Activated CD8-positive, alpha-beta T cell treated with anti-CD3 and anti-CD28 coated beads for 36 hours (primary cell): ENCODE measurements at regions of chr3 and their contacts with region 1.

Region 1: DNA sequence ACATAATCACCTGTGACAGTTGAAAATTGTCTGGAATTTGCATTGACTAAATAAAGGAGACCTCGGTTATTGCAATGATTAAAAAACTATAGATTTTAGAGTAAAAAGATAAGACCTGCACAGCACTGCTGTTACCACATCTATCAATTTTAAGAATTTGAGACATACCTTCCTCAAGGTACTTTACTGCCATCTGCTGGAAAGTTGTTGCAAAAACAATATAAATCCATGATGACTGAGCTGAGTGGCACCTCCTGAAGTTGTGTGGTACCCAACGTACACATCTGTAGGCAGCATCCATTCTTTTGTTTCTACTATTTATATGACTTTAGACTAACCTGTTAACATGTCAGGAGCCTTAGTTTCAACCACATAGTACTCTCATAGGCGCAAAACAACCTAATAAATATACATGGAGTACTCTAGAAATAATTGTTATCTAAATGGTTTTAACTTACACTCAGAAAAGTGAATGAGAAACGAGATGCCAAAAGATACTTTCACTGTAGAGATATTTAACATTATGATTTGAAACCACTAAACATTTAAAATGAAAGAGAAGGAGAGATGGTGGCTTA is 106.7 kb downstream of the GHSR start:
- DNase-seq: peak; percentile 16
- ATAC-seq: peak; percentile 81
- H3K4me3 Mint-ChIP-seq: no peak overlapping the region
- H3K27ac Mint-ChIP-seq: no peak overlapping the region
- H3K4me1 Mint-ChIP-seq: no peaks in the 10 kb centered on the region
- H3K27me3 Mint-ChIP-seq: no peaks in the 10 kb centered on the region
- CTCF ChIP-seq: peak; percentile 83

Region 2: DNA sequence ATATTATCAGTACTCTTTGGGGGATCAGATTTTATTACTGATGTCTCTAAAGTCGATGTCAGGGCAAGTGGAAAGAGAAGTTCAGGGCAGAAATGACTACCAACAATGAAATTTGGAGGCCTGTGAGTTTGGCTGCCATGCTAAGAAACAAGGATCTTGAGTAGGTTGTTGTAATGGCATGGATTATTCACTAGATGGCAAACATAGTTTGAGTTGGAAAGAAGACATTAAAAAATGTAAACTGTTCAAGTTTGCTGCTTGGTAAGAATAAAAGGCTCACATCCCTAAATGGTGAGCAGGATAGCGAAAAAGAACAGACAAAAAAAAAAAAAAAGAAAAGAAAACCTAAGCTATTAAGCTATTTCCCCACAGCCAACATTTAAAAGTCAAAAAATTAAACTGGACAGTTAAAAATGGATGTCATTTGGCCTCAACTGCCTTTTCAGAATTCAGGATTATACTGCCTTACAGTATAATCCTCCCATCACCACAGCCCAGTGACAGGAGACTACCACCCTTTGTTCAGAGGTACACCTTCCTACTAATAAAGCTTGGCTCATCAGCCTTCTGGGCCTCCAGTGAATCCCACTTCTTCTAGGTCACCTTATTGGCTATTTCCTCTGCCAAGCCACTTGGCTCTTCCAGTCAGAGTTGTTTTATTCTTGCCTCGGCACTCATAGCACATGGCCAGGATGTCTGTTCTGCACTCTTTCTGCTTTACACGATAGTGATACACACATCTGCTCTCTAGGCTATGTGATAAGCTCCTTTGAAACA is 695.0 kb before region 1 on chr3:
- CTCF ChIA-PET with region 1: interaction called, 16 read pairs
- POLR2A ChIA-PET with region 1: no interaction called
- intact Hi-C with region 1: no loop called
- DNase-seq: no peak
- ATAC-seq: no peak
- H3K4me3 Mint-ChIP-seq: no peak overlapping the region
- H3K27ac Mint-ChIP-seq: no peak overlapping the region
- H3K4me1 Mint-ChIP-seq: no peaks in the 10 kb centered on the region
- H3K27me3 Mint-ChIP-seq: no peaks in the 10 kb centered on the region
- CTCF ChIP-seq: peak; percentile 49

Region 3: DNA sequence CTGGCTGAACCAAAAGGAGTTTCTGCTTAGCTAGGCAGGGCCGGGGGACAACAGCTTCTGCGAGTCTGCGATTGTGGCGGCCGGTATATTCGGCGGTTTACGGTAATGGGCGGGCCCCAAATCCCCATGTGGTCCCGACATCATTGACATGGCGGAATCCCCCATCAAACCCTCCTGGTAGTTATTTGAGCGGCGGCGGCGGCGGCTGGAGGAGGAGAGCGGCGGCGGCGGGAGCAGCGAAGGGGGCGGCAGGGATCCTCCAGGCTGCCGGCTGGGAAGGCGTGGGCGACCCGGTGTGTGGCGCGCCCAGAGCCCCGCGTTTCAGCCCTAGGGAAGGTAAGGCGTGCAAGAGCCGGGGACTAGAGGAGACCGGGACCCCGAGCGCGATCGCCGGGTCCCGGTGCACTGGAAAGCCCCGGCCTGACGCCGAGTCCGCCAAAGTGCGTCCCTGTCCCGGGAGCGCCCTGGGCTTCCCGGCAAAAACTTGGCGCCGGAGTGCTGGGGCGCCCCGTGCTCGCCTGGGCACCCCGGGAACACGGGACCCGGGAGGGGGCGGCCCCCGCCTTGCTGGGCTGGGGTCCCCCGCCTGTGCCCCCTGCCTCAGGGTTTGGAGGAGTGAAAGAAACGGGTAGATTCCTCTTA is 302.0 kb before region 1 on chr3 and contains the start of gene FNDC3B:
- CTCF ChIA-PET with region 1: interaction called, 6 read pairs
- POLR2A ChIA-PET with region 1: no interaction called
- intact Hi-C with region 1: loop called (anchors 10 kb)
- DNase-seq: peak; percentile 97
- ATAC-seq: peak; percentile 92
- H3K4me3 Mint-ChIP-seq: peak within 1 kb of the TSS; percentile 86
- H3K27ac Mint-ChIP-seq: peak within 1 kb of the TSS; percentile 93
- H3K4me1 Mint-ChIP-seq: peaks cover 29% of the 10 kb centered on the region
- H3K27me3 Mint-ChIP-seq: no peaks in the 10 kb centered on the region
- CTCF ChIP-seq: no peak
- total RNA-seq, gene FNDC3B: 10.6 to 12.0 TPM

Region 4: GRCh38 chr3:172354931-172355499 is 13.4 kb after region 1 on chr3:
- CTCF ChIA-PET with region 1: interaction called, 26 read pairs
- POLR2A ChIA-PET with region 1: no interaction called
- intact Hi-C with region 1: no loop called
- DNase-seq: no peak
- ATAC-seq: no peak
- H3K4me3 Mint-ChIP-seq: no peak overlapping the region
- H3K27ac Mint-ChIP-seq: no peak overlapping the region
- H3K4me1 Mint-ChIP-seq: no peaks in the 10 kb centered on the region
- H3K27me3 Mint-ChIP-seq: no peaks in the 10 kb centered on the region
- CTCF ChIP-seq: no peak

Region 5: DNA sequence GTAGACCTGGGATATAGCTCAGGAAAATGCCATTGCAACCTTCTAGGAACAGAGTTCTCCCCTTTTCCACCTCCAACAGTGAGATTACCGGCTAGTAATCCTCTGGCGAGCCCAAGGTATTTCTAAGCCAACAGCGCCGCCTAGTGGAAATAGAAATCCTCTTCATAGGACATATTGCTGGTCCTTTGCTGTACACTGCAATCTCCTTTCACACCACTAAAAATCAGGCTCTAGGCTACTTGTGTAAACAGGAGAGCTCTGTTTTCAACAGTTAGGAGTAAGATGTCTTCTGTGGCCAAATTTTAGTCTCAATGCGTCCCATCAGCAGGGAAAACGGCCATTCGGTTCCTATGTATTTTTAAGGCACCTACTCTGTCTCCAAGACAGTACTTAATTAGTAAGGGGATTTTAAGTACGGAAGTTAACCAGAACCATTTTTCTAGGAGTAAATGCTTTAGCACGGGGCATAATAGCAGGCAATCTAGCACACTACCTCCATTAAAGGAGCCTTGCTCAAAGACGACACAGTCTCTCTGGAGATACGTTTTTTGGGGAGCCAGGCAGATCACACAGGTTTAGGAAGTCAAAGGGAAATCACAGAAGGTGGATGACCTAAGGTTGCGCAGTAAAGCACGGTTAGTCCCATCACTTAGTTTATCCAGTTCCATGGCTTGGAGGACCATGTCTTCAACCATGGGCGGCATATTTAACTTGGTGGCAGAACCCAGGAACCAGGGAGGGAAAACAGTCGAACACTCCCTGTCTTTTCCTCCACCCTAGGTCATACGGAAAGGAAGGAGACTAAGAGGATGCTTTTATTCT is 325.5 kb after region 1 on chr3:
- CTCF ChIA-PET with region 1: interaction called, 28 read pairs
- POLR2A ChIA-PET with region 1: no interaction called
- intact Hi-C with region 1: no loop called
- DNase-seq: peak; percentile 87
- ATAC-seq: peak; percentile 94
- H3K4me3 Mint-ChIP-seq: no peak overlapping the region
- H3K27ac Mint-ChIP-seq: no peak overlapping the region
- H3K4me1 Mint-ChIP-seq: peaks cover 14% of the 10 kb centered on the region
- H3K27me3 Mint-ChIP-seq: no peaks in the 10 kb centered on the region
- CTCF ChIP-seq: peak; percentile 69

Region 6: DNA sequence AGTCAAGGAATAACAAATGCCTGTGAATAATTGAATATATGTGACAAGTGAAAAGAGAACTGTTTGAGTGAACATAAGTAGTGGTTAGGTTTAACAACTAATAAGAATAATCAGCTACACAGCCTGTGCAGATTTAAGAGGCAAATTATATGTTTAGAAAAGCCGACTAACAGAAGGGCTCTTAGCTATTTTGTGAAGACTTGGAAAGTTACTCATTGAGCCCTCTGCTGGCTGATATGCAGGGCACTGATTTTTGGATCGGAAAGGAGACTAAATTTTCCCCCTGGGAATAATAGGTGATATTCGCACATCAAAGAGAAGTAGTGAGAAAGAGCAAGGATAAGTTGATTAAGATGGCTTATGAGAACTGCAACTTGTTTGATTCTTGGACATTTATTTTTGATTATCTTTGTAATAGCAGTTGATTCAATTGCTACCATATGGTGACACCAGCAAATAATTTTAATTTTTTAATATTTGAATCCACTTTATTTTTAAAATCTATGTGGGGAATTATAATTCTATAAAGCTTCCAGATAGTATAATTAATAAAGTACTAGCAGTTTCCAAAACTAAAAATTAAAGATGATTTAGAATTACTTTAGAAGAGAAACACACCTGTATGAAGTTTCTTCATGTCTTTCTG is 1212.2 kb after region 1 on chr3:
- CTCF ChIA-PET with region 1: no interaction called
- POLR2A ChIA-PET with region 1: no interaction called
- intact Hi-C with region 1: no loop called
- DNase-seq: no peak
- ATAC-seq: no peak
- H3K4me3 Mint-ChIP-seq: no peak overlapping the region
- H3K27ac Mint-ChIP-seq: no peak overlapping the region
- H3K4me1 Mint-ChIP-seq: no peaks in the 10 kb centered on the region
- H3K27me3 Mint-ChIP-seq: no peaks in the 10 kb centered on the region
- CTCF ChIP-seq: peak; percentile 34